HEK293 (cell line): ENCODE measurements at regions of chr7 and their contacts with region 1.

Region 1: DNA sequence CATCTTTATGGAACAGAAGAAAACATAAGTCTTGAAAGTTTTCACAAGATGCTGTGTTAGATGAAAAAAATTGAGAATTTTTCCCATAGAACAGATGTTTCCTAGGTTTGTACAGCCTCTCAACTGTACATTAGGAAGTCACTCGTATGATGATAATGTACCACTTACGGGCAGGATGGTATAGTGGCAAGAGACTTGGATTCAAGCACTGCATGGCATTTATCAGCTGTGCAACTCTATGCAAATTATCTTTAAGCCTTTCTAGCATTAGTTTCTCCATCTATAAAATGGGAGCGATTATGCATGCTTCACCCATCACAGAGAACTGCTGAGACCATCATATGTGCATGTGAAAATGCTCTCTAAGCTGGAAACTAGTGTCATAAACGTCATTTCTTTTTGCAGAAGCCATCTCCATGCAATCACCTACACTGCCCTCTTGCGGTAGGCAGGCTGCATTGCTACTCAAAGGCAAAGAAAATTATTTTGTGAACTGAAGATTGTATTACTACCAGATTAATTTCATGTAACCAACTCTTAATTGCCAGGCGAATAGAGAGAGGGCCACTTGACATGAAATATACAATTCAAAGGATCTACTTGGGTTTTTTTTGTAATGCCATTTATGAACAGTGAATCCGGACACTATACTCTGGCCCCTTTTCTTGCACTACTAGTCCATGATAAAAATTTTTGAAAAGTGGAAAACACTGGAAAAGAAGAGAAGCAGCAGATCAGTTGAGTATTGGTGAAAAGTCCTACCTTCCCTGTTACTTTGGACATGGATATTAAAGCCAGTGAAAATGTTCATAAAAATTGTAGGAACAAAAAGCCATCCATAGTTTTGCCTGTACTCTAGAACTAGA is 102.3 kb downstream of the JAZF1 start:
- H3K4me3 ChIP-seq: no peak overlapping the region
- H3K27ac ChIP-seq: no peak overlapping the region
- H3K4me1 ChIP-seq: peaks cover 7% of the 10 kb centered on the region; the same call in 1 of the 2 replicates
- CTCF ChIP-seq: peak; percentile 21; the same call in 1 of the 2 replicates

Region 2: GRCh38 chr7:28037220-28038010 is 40.9 kb before region 1 on chr7:
- CTCF ChIA-PET with region 1: interaction called, 11 read pairs
- POLR2A ChIA-PET with region 1: no interaction called
- H3K4me3 ChIP-seq: no peak overlapping the region
- H3K27ac ChIP-seq: no peak overlapping the region
- H3K4me1 ChIP-seq: peaks cover 9% of the 10 kb centered on the region
- CTCF ChIP-seq: no peak

Region 3: GRCh38 chr7:28052933-28053332 is 25.3 kb before region 1 on chr7:
- CTCF ChIA-PET with region 1: interaction called, 40 read pairs
- POLR2A ChIA-PET with region 1: no interaction called
- H3K4me3 ChIP-seq: no peak overlapping the region
- H3K27ac ChIP-seq: no peak overlapping the region
- H3K4me1 ChIP-seq: no peaks in the 10 kb centered on the region
- CTCF ChIP-seq: no peak